ENCODE measurements at regions of chr5 and their contacts with region 1.

Region 1: GRCh38 chr5:134527146-134527960 is 1.9 kb downstream of the JADE2 start:
- DNase-seq: peak; percentile 41 to 85 (median 70)
- ATAC-seq: peak; percentile 34
- H3K4me3 ChIP-seq: peak overlapping the region; percentile 82 to 87
- H3K4me3 Mint-ChIP-seq: peak overlapping the region; percentile 96
- H3K27ac ChIP-seq: peak overlapping the region; percentile 98
- H3K27ac Mint-ChIP-seq: peak overlapping the region; percentile 94
- H3K4me1 ChIP-seq: peaks cover 57% of the 10 kb centered on the region
- H3K4me1 Mint-ChIP-seq: peaks cover 58% of the 10 kb centered on the region
- H3K27me3 ChIP-seq: no peaks in the 10 kb centered on the region
- H3K27me3 Mint-ChIP-seq: no peaks in the 10 kb centered on the region
- CTCF ChIP-seq: peak; percentile 79

Region 2: GRCh38 chr5:134113902-134114875 is 413.2 kb before region 1 on chr5 and contains the start of gene TCF7:
- CTCF ChIA-PET with region 1: no interaction called
- POLR2A ChIA-PET with region 1: no interaction called
- intact Hi-C with region 1: loop called in 1 of 2 experiments (anchors 10 kb)
- DNase-seq: peak; percentile 67 to 92 (median 82)
- ATAC-seq: peak; percentile 67
- H3K4me3 ChIP-seq: peak within 1 kb of the TSS; percentile 78 to 99
- H3K4me3 Mint-ChIP-seq: peak within 1 kb of the TSS; percentile 95
- H3K27ac ChIP-seq: peak within 1 kb of the TSS; percentile 71 to 72
- H3K27ac Mint-ChIP-seq: peak within 1 kb of the TSS; percentile 96
- H3K4me1 ChIP-seq: peaks cover 37% of the 10 kb centered on the region
- H3K4me1 Mint-ChIP-seq: peaks cover 53% of the 10 kb centered on the region
- H3K27me3 ChIP-seq: no peaks in the 10 kb centered on the region
- H3K27me3 Mint-ChIP-seq: no peaks in the 10 kb centered on the region
- CTCF ChIP-seq: no peak
- total RNA-seq, gene TCF7: 517 to 538 TPM

Region 3: GRCh38 chr5:134411546-134412266 is 115.6 kb before region 1 on chr5 and contains the start of gene CDKN2AIPNL:
- CTCF ChIA-PET with region 1: interaction called, 16 read pairs
- POLR2A ChIA-PET with region 1: interaction called, 64 read pairs
- intact Hi-C with region 1: loop called (anchors 1 kb)
- DNase-seq: peak; percentile 81 to 95 (median 91)
- ATAC-seq: peak; percentile 99
- H3K4me3 ChIP-seq: peak within 1 kb of the TSS; percentile 77 to 84
- H3K4me3 Mint-ChIP-seq: peak within 1 kb of the TSS; percentile 90
- H3K27ac ChIP-seq: peak within 1 kb of the TSS; percentile 65 to 66
- H3K27ac Mint-ChIP-seq: peak within 1 kb of the TSS; percentile 90
- H3K4me1 ChIP-seq: peaks cover 23% of the 10 kb centered on the region
- H3K4me1 Mint-ChIP-seq: peaks cover 38% of the 10 kb centered on the region
- H3K27me3 ChIP-seq: no peaks in the 10 kb centered on the region
- H3K27me3 Mint-ChIP-seq: no peaks in the 10 kb centered on the region
- CTCF ChIP-seq: peak; percentile 73
- total RNA-seq, gene CDKN2AIPNL: 14.7 to 15.5 TPM

Region 4: DNA sequence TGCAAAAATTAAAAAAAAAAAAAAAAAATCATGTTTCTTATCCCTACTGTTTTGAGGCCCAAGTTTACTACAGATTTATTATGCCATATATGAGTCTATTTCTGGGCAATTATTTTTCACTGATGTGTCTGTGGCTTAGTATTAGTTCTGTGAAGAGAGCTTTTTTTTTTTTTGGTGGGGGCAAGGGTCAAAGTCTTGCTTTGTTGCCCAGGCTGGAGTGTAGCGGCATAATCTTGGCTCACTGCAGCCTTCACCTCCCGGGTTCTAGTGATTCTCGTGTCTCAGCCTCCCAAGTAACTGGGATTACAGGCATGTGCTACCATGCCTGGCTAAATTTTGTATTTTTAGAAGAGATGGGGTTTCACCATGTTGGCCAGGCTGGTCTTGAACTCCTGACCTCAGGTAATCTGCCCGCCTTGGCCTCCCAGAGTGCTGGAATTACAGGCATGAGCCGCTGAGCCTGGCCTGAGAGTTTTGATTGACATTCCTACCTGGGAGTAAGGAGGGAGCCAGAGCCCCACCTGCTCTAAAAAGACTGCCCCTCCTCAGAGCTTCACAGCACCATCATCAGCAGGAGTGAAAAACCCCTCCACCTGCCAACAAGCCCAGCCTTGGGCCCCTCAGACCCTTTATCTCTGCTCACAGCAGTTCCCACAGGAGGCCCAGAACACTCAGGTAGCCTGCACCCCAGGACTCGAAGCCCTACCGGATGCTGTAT is 38.0 kb before region 1 on chr5:
- CTCF ChIA-PET with region 1: no interaction called
- POLR2A ChIA-PET with region 1: no interaction called
- intact Hi-C with region 1: loop called in 1 of 2 experiments (anchors 5 kb)
- DNase-seq: no peak
- ATAC-seq: no peak
- H3K4me3 ChIP-seq: no peak overlapping the region
- H3K4me3 Mint-ChIP-seq: no peak overlapping the region
- H3K27ac ChIP-seq: no peak overlapping the region
- H3K27ac Mint-ChIP-seq: no peak overlapping the region
- H3K4me1 ChIP-seq: no peaks in the 10 kb centered on the region
- H3K4me1 Mint-ChIP-seq: no peaks in the 10 kb centered on the region
- H3K27me3 ChIP-seq: no peaks in the 10 kb centered on the region
- H3K27me3 Mint-ChIP-seq: no peaks in the 10 kb centered on the region
- CTCF ChIP-seq: no peak

Region 5: GRCh38 chr5:134577796-134578363 is 50.5 kb after region 1 on chr5:
- CTCF ChIA-PET with region 1: interaction called, 34 read pairs
- POLR2A ChIA-PET with region 1: interaction called, 3 read pairs
- intact Hi-C with region 1: loop called (anchors 1 to 2 kb)
- DNase-seq: peak; percentile 55 to 82 (median 78)
- ATAC-seq: peak; percentile 77
- H3K4me3 ChIP-seq: no peak overlapping the region
- H3K4me3 Mint-ChIP-seq: no peak overlapping the region
- H3K27ac ChIP-seq: no peak overlapping the region
- H3K27ac Mint-ChIP-seq: peak overlapping the region; percentile 72
- H3K4me1 ChIP-seq: no peaks in the 10 kb centered on the region
- H3K4me1 Mint-ChIP-seq: peaks cover 9% of the 10 kb centered on the region
- H3K27me3 ChIP-seq: no peaks in the 10 kb centered on the region
- H3K27me3 Mint-ChIP-seq: no peaks in the 10 kb centered on the region
- CTCF ChIP-seq: peak; percentile 79

Region 6: GRCh38 chr5:134813407-134813806 is 286.1 kb after region 1 on chr5:
- CTCF ChIA-PET with region 1: no interaction called
- POLR2A ChIA-PET with region 1: no interaction called
- intact Hi-C with region 1: no loop called
- DNase-seq: peak in 2 of 9 experiments; percentile 10 to 47
- ATAC-seq: peak; percentile 38
- H3K4me3 ChIP-seq: no peak overlapping the region
- H3K4me3 Mint-ChIP-seq: no peak overlapping the region
- H3K27ac ChIP-seq: no peak overlapping the region
- H3K27ac Mint-ChIP-seq: no peak overlapping the region
- H3K4me1 ChIP-seq: no peaks in the 10 kb centered on the region
- H3K4me1 Mint-ChIP-seq: peaks cover 9% of the 10 kb centered on the region
- H3K27me3 ChIP-seq: no peaks in the 10 kb centered on the region
- H3K27me3 Mint-ChIP-seq: no peaks in the 10 kb centered on the region
- CTCF ChIP-seq: no peak

Region 7: GRCh38 chr5:134904630-134905245 is 377.4 kb after region 1 on chr5 and contains the start of gene PCBD2:
- CTCF ChIA-PET with region 1: no interaction called
- POLR2A ChIA-PET with region 1: interaction called, 5 read pairs
- intact Hi-C with region 1: loop called in 1 of 2 experiments (anchors 10 kb)
- DNase-seq: peak; percentile 88 to 96 (median 91)
- ATAC-seq: peak; percentile 86
- H3K4me3 ChIP-seq: peak within 1 kb of the TSS; percentile 59 to 63
- H3K4me3 Mint-ChIP-seq: peak within 1 kb of the TSS; percentile 98
- H3K27ac ChIP-seq: peak within 1 kb of the TSS; percentile 86 to 89
- H3K27ac Mint-ChIP-seq: peak within 1 kb of the TSS; percentile 99
- H3K4me1 ChIP-seq: peaks cover 4% of the 10 kb centered on the region
- H3K4me1 Mint-ChIP-seq: peaks cover 10% of the 10 kb centered on the region
- H3K27me3 ChIP-seq: no peaks in the 10 kb centered on the region
- H3K27me3 Mint-ChIP-seq: no peaks in the 10 kb centered on the region
- CTCF ChIP-seq: peak; percentile 67
- total RNA-seq, gene PCBD2: 4.2 to 4.4 TPM